ENCODE measurements at regions of chr9 and their contacts with region 1.

Region 1: DNA sequence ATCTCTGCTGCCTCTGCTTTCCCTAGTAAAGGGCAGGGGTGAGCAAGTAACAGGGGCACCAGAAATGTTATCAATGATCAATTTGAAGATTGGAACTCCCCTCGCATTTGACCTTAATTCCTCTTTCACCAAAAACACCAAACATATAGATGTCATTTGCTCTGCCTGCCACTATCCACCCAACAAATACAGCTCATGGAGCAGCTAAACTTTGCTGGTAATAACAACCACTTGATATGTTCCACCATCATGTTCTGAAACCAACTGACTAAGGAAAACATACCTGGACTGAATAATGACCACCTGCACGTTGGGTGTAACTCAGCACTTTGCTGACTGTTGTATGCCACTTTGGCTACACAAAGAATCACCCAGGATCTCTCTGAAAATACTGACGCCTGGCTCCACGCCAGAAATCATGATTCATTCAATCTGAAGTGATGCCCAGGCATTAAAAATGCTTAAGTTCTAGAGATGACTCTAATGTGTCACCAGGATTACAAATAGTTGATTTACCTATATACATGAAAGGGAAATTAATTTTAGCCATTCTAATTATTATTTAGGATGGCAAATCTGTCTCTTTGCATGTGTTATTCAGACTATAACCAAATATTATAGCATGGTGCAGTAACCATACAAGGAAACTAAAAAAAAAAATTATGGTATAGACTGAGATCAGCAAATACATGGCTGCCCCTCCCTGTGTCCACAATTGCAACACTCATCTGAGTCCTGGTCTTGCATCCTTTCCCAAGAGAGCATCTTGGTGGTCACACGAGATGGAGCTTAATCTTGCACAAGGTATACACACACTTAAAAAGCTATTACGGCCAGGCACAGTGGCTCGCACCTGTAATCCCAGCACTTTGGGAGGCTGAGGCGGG is 43.1 kb upstream of the TTC39B start:
- DNase-seq: peak; percentile 88
- ATAC-seq: peak; percentile 12; the same call in 2 of the 3 replicates
- H3K4me3 ChIP-seq: no peak overlapping the region
- H3K27ac ChIP-seq: peak overlapping the region; percentile 83
- H3K4me1 ChIP-seq: peaks cover 89% of the 10 kb centered on the region
- H3K27me3 ChIP-seq: no peaks in the 10 kb centered on the region
- CTCF ChIP-seq: no peak
- EP300 ChIP-seq: peak in 1 of 2 experiments; percentile 82; a peak in 2 of 4 replicates
- POLR2A ChIP-seq: no peak
- RAD21 ChIP-seq: no peak

Region 2: GRCh38 chr9:14956208-14956607 is 393.9 kb before region 1 on chr9:
- CTCF ChIA-PET with region 1: no interaction called
- POLR2A ChIA-PET with region 1: no interaction called
- in situ Hi-C with region 1: no loop called
- intact Hi-C with region 1: no loop called
- DNase-seq: no peak
- ATAC-seq: no peak
- H3K4me3 ChIP-seq: no peak overlapping the region
- H3K27ac ChIP-seq: no peak overlapping the region
- H3K4me1 ChIP-seq: peaks cover 28% of the 10 kb centered on the region
- H3K27me3 ChIP-seq: no peaks in the 10 kb centered on the region
- CTCF ChIP-seq: no peak
- EP300 ChIP-seq: no peak
- POLR2A ChIP-seq: no peak
- RAD21 ChIP-seq: no peak

Region 3: DNA sequence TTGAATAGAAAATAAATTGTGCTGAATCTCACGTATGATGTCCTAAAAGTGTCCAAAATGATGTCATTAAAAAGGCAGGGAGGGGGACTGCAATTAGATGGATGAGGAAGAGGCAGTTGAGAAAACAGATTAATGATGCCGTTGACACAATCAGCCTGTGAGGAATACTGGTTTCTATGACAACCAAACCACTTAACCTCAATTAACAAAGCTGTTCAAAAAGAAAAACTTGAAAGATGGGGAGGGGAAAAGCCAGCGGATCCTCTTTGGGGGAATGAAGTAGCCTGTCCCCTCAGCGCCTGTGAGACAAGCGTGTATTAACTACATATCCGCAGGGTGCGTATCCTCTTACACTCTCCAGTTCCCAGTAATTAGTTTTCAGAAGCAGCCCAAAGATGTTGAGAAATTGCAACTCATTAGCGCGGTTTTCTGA is 203.9 kb before region 1 on chr9:
- CTCF ChIA-PET with region 1: no interaction called
- POLR2A ChIA-PET with region 1: no interaction called
- in situ Hi-C with region 1: no loop called
- intact Hi-C with region 1: no loop called
- DNase-seq: no peak
- ATAC-seq: no peak
- H3K4me3 ChIP-seq: no peak overlapping the region
- H3K27ac ChIP-seq: no peak overlapping the region
- H3K4me1 ChIP-seq: no peaks in the 10 kb centered on the region
- H3K27me3 ChIP-seq: peaks cover 2 to 9% of the 10 kb centered on the region in 2 experiments; a peak in 1 of 5 replicates
- CTCF ChIP-seq: no peak
- EP300 ChIP-seq: no peak
- POLR2A ChIP-seq: no peak
- RAD21 ChIP-seq: no peak

Region 4: DNA sequence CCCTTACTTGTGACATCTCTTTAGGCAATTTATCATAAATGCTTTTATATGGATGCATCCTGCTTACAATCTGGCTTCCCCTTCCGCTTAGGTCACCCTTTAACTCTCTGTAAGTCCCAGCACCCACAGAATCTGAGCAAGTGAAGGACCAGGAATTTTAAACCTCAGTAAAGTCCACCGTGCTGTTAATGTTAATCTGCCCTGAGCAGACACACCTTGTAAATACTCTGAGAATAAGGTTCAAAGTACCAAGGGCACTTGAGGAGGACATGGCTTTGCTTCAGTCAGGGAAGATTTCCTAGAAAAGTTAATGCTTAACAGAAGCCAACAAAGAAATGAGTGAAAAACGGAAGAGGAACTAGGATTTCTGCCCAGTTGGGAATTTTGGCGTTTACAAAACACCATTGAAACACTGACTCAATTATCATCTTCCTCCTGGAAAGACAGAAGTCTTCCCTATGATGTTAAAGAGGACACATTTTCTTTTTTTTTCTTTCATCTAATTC is 16.7 kb before region 1 on chr9:
- CTCF ChIA-PET with region 1: no interaction called
- POLR2A ChIA-PET with region 1: interaction called, 4 read pairs
- in situ Hi-C with region 1: no loop called
- intact Hi-C with region 1: loop called (anchors 2 kb)
- DNase-seq: peak; percentile 74
- ATAC-seq: peak; percentile 90
- H3K4me3 ChIP-seq: peak overlapping the region in 2 of 3 experiments; percentile 14 to 27; a peak in 2 of 6 replicates
- H3K27ac ChIP-seq: peak overlapping the region; percentile 62
- H3K4me1 ChIP-seq: peaks cover 64% of the 10 kb centered on the region
- H3K27me3 ChIP-seq: no peaks in the 10 kb centered on the region
- CTCF ChIP-seq: no peak
- EP300 ChIP-seq: peak in 1 of 2 experiments; percentile 85; a peak in 2 of 4 replicates
- POLR2A ChIP-seq: no peak
- RAD21 ChIP-seq: no peak

Measured in HepG2 (cell line).